ENCODE measurements at regions of chr15 and their contacts with region 1.

Region 1: GRCh38 chr15:67976506-67977073 is 77.5 kb upstream of the PIAS1 start:
- DNase-seq: no peak
- H3K4me3 ChIP-seq: no peak overlapping the region
- H3K27ac ChIP-seq: no peak overlapping the region
- H3K4me1 ChIP-seq: no peaks in the 10 kb centered on the region
- H3K27me3 ChIP-seq: no peaks in the 10 kb centered on the region
- CTCF ChIP-seq: no peak

Region 2: DNA sequence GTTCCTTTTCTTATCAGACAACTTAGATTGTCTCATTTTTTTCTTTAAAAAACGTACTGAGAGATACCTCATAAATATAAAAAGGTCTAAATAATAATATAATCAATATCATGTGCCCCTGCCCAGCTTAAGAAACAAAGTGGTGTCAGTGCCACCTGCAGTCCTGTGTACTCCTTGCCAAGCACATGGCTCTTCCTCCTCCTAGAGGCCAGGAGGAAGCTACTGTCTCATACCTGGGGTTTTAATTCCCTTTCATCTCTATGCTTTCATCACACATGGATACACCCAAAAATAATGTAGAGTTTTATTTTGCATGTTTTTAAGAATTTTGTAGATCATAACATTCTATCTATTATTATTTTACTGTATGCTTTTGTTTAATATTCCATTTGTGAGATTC is 554.3 kb before region 1 on chr15:
- CTCF ChIA-PET with region 1: no interaction called
- dilution Hi-C with region 1: no loop called
- in situ Hi-C with region 1: no loop called
- intact Hi-C with region 1: no loop called
- DNase-seq: no peak
- H3K4me3 ChIP-seq: no peak overlapping the region
- H3K27ac ChIP-seq: no peak overlapping the region
- H3K4me1 ChIP-seq: no peaks in the 10 kb centered on the region
- H3K27me3 ChIP-seq: no peaks in the 10 kb centered on the region
- CTCF ChIP-seq: peak in 1 of 2 donors; percentile 21

Region 3: GRCh38 chr15:67850995-67851571 is 125.5 kb before region 1 on chr15:
- CTCF ChIA-PET with region 1: no interaction called
- dilution Hi-C with region 1: loop called (anchors 10 kb)
- in situ Hi-C with region 1: no loop called
- intact Hi-C with region 1: no loop called
- DNase-seq: peak; percentile 75
- H3K4me3 ChIP-seq: no peak overlapping the region
- H3K27ac ChIP-seq: no peak overlapping the region
- H3K4me1 ChIP-seq: no peaks in the 10 kb centered on the region
- H3K27me3 ChIP-seq: no peaks in the 10 kb centered on the region
- CTCF ChIP-seq: no peak

Region 4: GRCh38 chr15:67897646-67898339 is 78.8 kb before region 1 on chr15:
- CTCF ChIA-PET with region 1: no interaction called
- dilution Hi-C with region 1: no loop called
- in situ Hi-C with region 1: no loop called
- intact Hi-C with region 1: no loop called
- DNase-seq: no peak
- H3K4me3 ChIP-seq: no peak overlapping the region
- H3K27ac ChIP-seq: no peak overlapping the region
- H3K4me1 ChIP-seq: no peaks in the 10 kb centered on the region
- H3K27me3 ChIP-seq: no peaks in the 10 kb centered on the region
- CTCF ChIP-seq: no peak

Region 5: DNA sequence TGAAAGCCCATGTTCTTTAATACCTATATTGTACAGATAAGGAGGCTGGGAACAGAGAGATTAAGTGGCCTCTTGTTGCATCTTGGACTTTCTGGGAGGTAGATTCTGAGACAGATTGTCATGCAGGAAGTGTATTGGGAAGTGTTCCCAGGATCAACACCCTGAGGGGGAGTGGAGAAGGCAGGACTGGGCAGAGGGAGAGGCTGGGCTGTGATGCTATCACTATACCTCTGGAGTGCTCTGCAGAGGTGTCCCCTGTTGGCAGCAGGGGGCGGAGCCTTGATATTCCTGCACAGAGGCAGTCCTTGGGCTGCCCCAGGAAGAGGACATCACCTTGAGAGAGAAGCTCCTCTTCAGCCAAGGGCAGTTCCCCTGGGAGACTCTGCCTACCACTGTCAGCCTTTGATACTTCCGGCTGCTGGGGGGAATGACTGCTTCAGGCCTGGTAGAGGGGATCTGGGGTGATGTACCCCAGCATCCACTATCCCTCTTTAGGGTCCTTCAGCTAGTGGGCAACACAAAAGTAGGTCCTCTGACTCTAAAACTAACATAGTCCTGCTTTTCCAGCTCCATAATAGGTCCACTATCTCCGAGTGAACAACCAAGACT is 39.3 kb before region 1 on chr15:
- CTCF ChIA-PET with region 1: no interaction called
- dilution Hi-C with region 1: no loop called
- in situ Hi-C with region 1: no loop called
- intact Hi-C with region 1: no loop called
- DNase-seq: peak; percentile 28
- H3K4me3 ChIP-seq: no peak overlapping the region
- H3K27ac ChIP-seq: no peak overlapping the region
- H3K4me1 ChIP-seq: peaks cover 25% of the 10 kb centered on the region
- H3K27me3 ChIP-seq: no peaks in the 10 kb centered on the region
- CTCF ChIP-seq: no peak

Region 6: GRCh38 chr15:68354923-68355322 is 378.3 kb after region 1 on chr15:
- CTCF ChIA-PET with region 1: no interaction called
- dilution Hi-C with region 1: no loop called
- in situ Hi-C with region 1: no loop called
- intact Hi-C with region 1: no loop called
- DNase-seq: peak; percentile 93
- H3K4me3 ChIP-seq: no peak overlapping the region
- H3K27ac ChIP-seq: no peak overlapping the region
- H3K4me1 ChIP-seq: peaks cover 27% of the 10 kb centered on the region
- H3K27me3 ChIP-seq: no peaks in the 10 kb centered on the region
- CTCF ChIP-seq: no peak